Naive thymus-derived CD4-positive, alpha-beta T cell (primary cell): ENCODE measurements at regions of chr13 and their contacts with region 1.

Region 1: GRCh38 chr13:48303359-48304142 is at the start of gene RB1:
- DNase-seq: peak; percentile 85 to 92 (median 89)
- ATAC-seq: peak; percentile 92
- H3K4me3 ChIP-seq: peak within 1 kb of the TSS; percentile 85
- H3K4me3 Mint-ChIP-seq: peak within 1 kb of the TSS; percentile 76 to 99 (median 94)
- H3K27ac ChIP-seq: peak within 1 kb of the TSS; percentile 99
- H3K27ac Mint-ChIP-seq: peak within 1 kb of the TSS; percentile 93 to 98 (median 97)
- H3K4me1 ChIP-seq: peaks cover 10 to 15% of the 10 kb centered on the region in 2 donors
- H3K4me1 Mint-ChIP-seq: peaks cover 16 to 47% (median 40%) of the 10 kb centered on the region in 7 donors
- H3K27me3 ChIP-seq: no peaks in the 10 kb centered on the region
- H3K27me3 Mint-ChIP-seq: no peaks in the 10 kb centered on the region
- total RNA-seq, gene RB1: 18.0 to 37.1 (median 23.6) TPM

Region 2: GRCh38 chr13:48037346-48038173 is 266.0 kb before region 1 on chr13 and contains the start of gene NUDT15:
- CTCF ChIA-PET with region 1: no interaction called
- POLR2A ChIA-PET with region 1: interaction called, 3 read pairs
- intact Hi-C with region 1: loop called (anchors 1 kb)
- DNase-seq: peak; percentile 93 to 98 (median 97)
- ATAC-seq: peak; percentile 96
- H3K4me3 ChIP-seq: peak within 1 kb of the TSS; percentile 90
- H3K4me3 Mint-ChIP-seq: peak within 1 kb of the TSS; percentile 82 to 98 (median 95)
- H3K27ac ChIP-seq: peak within 1 kb of the TSS; percentile 91
- H3K27ac Mint-ChIP-seq: peak within 1 kb of the TSS; percentile 96 to 100 (median 97)
- H3K4me1 ChIP-seq: peaks cover 14 to 15% of the 10 kb centered on the region in 2 donors
- H3K4me1 Mint-ChIP-seq: peaks cover 15 to 52% (median 40%) of the 10 kb centered on the region in 7 donors
- H3K27me3 ChIP-seq: no peaks in the 10 kb centered on the region
- H3K27me3 Mint-ChIP-seq: no peaks in the 10 kb centered on the region
- total RNA-seq, gene NUDT15: 4.3 to 13.6 (median 8.7) TPM

Region 3: GRCh38 chr13:48155848-48156247 is 147.7 kb before region 1 on chr13:
- CTCF ChIA-PET with region 1: interaction called, 4 read pairs
- POLR2A ChIA-PET with region 1: interaction called, 5 read pairs
- intact Hi-C with region 1: loop called in 1 of 2 experiments (anchors 1 kb)
- DNase-seq: peak in 7 of 9 donors; percentile 49 to 81 (median 74)
- ATAC-seq: peak; percentile 88
- H3K4me3 ChIP-seq: peak overlapping the region; percentile 34
- H3K4me3 Mint-ChIP-seq: peak overlapping the region; percentile 62 to 83 (median 74)
- H3K27ac ChIP-seq: peak overlapping the region; percentile 75
- H3K27ac Mint-ChIP-seq: peak overlapping the region; percentile 89 to 99 (median 92)
- H3K4me1 ChIP-seq: peaks cover 28 to 64% of the 10 kb centered on the region in 2 donors
- H3K4me1 Mint-ChIP-seq: peaks cover 47 to 89% (median 78%) of the 10 kb centered on the region in 7 donors
- H3K27me3 ChIP-seq: no peaks in the 10 kb centered on the region
- H3K27me3 Mint-ChIP-seq: no peaks in the 10 kb centered on the region

Region 4: DNA sequence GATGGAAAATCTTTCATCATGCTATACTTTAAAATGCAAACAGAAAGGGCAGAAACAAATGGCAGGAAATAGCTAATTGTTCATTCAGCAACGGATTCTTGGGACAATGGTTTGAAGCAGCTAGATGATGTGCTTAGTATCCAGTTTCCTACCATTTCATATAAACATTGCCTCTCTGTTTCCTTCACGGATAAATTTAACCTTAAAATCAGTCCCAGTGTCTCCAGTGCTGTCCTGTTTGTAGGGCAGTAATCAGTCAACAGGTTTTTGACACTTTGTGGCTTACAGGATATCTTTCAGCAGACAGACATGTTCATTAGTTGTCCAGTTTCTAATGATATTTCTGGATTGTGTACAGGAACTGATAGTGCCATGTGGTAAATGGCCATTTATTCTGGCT is 24.7 kb before region 1 on chr13:
- CTCF ChIA-PET with region 1: no interaction called
- POLR2A ChIA-PET with region 1: interaction called, 4 read pairs
- intact Hi-C with region 1: loop called in 1 of 2 experiments (anchors 2 kb)
- DNase-seq: no peak
- ATAC-seq: no peak
- H3K4me3 ChIP-seq: no peak overlapping the region
- H3K4me3 Mint-ChIP-seq: no peak overlapping the region
- H3K27ac ChIP-seq: no peak overlapping the region
- H3K27ac Mint-ChIP-seq: no peak overlapping the region
- H3K4me1 ChIP-seq: no peaks in the 10 kb centered on the region
- H3K4me1 Mint-ChIP-seq: peaks cover 0 to 1% (median 0%) of the 10 kb centered on the region in 7 donors
- H3K27me3 ChIP-seq: no peaks in the 10 kb centered on the region
- H3K27me3 Mint-ChIP-seq: peaks cover 0 to 14% (median 0%) of the 10 kb centered on the region in 5 donors

Region 5: DNA sequence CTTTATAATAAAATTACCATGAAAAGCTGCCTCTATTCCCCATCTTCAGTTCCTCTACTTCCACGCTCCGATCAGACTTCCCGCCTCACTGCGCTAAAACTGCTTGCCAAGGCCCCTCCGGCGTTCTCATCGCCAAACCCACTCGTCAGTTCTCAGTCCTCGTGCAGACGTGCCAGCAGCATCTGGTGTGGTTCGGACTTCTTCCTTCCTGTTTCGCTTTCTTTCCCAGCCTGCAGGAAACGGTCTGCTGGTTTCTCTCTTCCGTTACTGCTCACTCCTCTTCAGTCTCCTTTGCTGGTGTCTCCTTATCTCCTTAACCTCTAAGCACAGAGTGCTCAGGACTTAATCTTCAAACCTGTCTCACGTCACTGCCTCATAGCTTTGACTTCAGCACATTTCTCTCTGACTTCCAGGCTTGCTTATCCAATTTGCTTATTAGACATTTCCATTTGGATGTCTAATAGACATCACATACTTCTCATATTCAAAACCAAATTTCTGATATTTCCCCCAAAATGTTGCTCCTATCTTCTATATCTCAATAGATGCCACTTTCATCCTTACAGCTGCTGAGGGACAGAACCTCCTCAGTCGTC is 189.0 kb after region 1 on chr13:
- CTCF ChIA-PET with region 1: no interaction called
- POLR2A ChIA-PET with region 1: no interaction called
- intact Hi-C with region 1: loop called in 1 of 2 experiments (anchors 5 kb)
- DNase-seq: peak; percentile 38 to 79 (median 74)
- ATAC-seq: peak; percentile 91
- H3K4me3 ChIP-seq: peak overlapping the region; percentile 73
- H3K4me3 Mint-ChIP-seq: no peak overlapping the region
- H3K27ac ChIP-seq: peak overlapping the region; percentile 74
- H3K27ac Mint-ChIP-seq: no peak overlapping the region
- H3K4me1 ChIP-seq: peaks cover 67% of the 10 kb centered on the region in 2 donors
- H3K4me1 Mint-ChIP-seq: peaks cover 1 to 55% (median 34%) of the 10 kb centered on the region in 7 donors
- H3K27me3 ChIP-seq: no peaks in the 10 kb centered on the region
- H3K27me3 Mint-ChIP-seq: no peaks in the 10 kb centered on the region

Region 6: DNA sequence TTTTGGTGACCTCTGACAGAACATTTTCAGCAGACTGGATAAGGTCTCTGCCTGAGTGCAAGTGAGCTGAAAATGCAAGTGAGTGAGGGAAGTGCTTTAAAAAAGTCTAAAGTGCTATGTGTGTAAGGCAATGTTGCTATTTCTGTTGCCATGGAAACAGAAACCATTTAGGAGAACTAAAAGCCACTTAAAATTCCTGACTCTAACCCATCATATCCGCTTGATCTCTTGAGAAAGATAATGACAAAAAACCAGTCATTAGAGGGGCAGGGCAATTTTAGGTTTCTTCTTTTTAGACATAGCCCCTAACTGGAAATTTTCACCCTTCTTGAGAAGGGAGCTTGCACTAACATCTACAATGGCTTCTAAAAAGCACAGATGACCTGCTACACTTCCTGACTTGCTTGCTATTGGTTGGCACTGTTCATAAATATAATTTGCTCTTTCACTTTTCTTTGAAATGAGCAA is 350.0 kb after region 1 on chr13 and contains the start of gene CYSLTR2:
- CTCF ChIA-PET with region 1: no interaction called
- POLR2A ChIA-PET with region 1: no interaction called
- intact Hi-C with region 1: loop called in 1 of 2 experiments (anchors 5 kb)
- DNase-seq: peak in 7 of 9 donors; percentile 63 to 89 (median 81)
- ATAC-seq: peak; percentile 89
- H3K4me3 ChIP-seq: peak within 1 kb of the TSS; percentile 49
- H3K4me3 Mint-ChIP-seq: peak within 1 kb of the TSS; percentile 77 to 98 (median 86)
- H3K27ac ChIP-seq: peak within 1 kb of the TSS; percentile 82
- H3K27ac Mint-ChIP-seq: peak within 1 kb of the TSS; percentile 86 to 99 (median 94)
- H3K4me1 ChIP-seq: peaks cover 11 to 26% of the 10 kb centered on the region in 2 donors
- H3K4me1 Mint-ChIP-seq: peaks cover 22 to 65% (median 56%) of the 10 kb centered on the region in 7 donors
- H3K27me3 ChIP-seq: no peaks in the 10 kb centered on the region
- H3K27me3 Mint-ChIP-seq: peaks cover 0 to 2% (median 0%) of the 10 kb centered on the region in 5 donors
- total RNA-seq, gene CYSLTR2: 2.1 to 6.5 (median 3.5) TPM